ENCODE measurements at regions of chr9 and their contacts with region 1.

Region 1: GRCh38 chr9:22119537-22120158 is 110.5 kb upstream of the CDKN2B start:
- DNase-seq: no peak
- H3K4me3 Mint-ChIP-seq: no peak overlapping the region
- H3K27ac Mint-ChIP-seq: no peak overlapping the region
- H3K4me1 Mint-ChIP-seq: peaks cover 23% of the 10 kb centered on the region
- H3K27me3 Mint-ChIP-seq: peaks cover 53% of the 10 kb centered on the region

Region 2: DNA sequence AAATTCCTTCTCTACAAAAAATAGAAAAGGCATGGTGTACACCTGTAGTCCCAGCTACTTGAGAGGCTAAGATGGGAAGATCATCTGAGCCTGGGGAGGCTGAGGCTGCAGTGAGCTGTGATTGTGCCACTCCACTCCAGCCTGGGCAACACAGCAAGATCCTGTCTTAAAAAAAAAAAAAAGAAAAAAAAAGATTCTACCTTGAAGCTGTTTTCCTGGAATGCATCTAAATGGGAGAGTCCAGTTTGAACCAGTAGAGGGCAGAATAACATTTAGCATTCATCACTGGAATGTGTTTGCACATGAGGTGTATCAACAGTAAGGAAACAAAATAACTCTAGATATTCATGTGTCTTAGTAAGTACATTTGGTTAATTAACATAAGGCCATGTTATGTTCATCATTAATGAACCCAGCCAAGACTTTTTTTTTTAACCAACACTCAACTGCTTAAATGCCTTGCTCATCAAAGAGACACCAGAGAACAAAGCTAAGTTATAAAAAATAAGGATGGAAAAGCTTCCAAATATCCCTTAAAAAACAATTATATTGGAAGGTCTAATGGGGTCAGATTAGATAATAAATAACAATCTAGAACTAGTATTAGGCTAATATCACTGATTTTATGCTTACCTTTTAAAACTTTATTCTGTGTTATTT is 653.7 kb before region 1 on chr9:
- intact Hi-C with region 1: loop called (anchors 10 kb)
- DNase-seq: peak; percentile 10
- H3K4me3 Mint-ChIP-seq: no peak overlapping the region
- H3K27ac Mint-ChIP-seq: no peak overlapping the region
- H3K4me1 Mint-ChIP-seq: no peaks in the 10 kb centered on the region
- H3K27me3 Mint-ChIP-seq: peaks cover 34% of the 10 kb centered on the region

Region 3: DNA sequence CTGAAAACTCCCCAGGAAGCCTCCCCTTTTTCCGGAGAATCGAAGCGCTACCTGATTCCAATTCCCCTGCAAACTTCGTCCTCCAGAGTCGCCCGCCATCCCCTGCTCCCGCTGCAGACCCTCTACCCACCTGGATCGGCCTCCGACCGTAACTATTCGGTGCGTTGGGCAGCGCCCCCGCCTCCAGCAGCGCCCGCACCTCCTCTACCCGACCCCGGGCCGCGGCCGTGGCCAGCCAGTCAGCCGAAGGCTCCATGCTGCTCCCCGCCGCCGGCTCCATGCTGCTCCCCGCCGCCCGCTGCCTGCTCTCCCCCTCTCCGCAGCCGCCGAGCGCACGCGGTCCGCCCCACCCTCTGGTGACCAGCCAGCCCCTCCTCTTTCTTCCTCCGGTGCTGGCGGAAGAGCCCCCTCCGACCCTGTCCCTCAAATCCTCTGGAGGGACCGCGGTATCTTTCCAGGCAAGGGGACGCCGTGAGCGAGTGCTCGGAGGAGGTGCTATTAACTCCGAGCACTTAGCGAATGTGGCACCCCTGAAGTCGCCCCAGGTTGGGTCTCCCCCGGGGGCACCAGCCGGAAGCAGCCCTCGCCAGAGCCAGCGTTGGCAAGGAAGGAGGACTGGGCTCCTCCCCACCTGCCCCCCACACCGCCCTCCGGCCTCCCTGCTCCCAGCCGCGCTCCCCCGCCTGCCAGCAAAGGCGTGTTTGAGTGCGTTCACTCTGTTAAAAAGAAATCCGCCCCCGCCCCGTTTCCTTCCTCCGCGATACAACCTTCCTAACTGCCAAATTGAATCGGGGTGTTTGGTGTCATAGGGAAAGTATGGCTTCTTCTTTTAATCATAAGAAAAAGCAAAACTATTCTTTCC is 144.9 kb before region 1 on chr9:
- intact Hi-C with region 1: loop called (anchors 2 kb)
- DNase-seq: no peak
- H3K4me3 Mint-ChIP-seq: peak overlapping the region; percentile 86
- H3K27ac Mint-ChIP-seq: peak overlapping the region; percentile 66
- H3K4me1 Mint-ChIP-seq: peaks cover 40% of the 10 kb centered on the region
- H3K27me3 Mint-ChIP-seq: peaks cover 91% of the 10 kb centered on the region

Region 4: DNA sequence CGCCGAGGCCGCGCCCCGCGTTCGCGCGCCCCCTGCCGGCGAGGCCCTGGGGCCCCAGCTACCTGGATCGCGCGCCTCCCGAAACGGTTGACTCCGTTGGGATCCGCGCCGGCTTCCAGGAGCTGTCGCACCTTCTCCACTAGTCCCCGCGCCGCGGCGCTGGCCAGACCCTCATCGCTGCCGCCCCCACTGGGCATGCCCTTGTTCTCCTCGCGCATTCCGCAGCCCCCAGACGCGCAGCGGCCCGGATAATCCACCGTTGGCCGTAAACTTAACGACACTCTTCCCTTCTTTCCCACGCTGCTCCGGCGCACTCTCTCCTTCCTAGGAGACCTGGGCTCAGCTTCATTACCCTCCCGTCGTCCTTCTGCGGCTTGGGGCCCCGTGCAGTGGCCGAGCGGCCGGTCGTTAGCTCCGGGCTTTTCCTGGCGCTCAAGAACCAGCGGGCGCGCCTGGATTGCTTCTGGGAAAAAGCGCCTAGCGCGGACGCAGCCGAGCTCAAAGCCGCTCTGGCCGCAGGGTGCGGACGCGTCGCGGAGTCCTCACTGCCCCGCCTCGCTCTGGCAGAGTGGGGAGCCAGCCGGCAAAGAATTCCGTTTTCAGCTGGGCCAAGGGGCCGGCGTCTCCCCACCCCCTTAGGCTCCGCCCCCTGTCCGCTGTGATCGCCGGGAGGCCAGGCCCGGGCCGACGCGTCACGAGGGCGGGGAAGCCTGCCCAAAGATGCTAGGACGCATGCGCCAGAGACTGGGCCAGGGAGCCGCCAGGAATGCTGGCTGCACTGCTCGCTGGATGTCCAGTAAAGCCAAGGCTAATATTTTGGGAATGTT is 110.7 kb before region 1 on chr9 and contains the start of gene CDKN2B:
- intact Hi-C with region 1: loop called (anchors 1 kb)
- DNase-seq: peak; percentile 66
- H3K4me3 Mint-ChIP-seq: peak within 1 kb of the TSS; percentile 82
- H3K27ac Mint-ChIP-seq: no peak within 1 kb of the TSS
- H3K4me1 Mint-ChIP-seq: peaks cover 36% of the 10 kb centered on the region
- H3K27me3 Mint-ChIP-seq: peaks cover 65% of the 10 kb centered on the region
- total RNA-seq, gene CDKN2B: 0.73 and 0.76 TPM in 2 replicates

Region 5: DNA sequence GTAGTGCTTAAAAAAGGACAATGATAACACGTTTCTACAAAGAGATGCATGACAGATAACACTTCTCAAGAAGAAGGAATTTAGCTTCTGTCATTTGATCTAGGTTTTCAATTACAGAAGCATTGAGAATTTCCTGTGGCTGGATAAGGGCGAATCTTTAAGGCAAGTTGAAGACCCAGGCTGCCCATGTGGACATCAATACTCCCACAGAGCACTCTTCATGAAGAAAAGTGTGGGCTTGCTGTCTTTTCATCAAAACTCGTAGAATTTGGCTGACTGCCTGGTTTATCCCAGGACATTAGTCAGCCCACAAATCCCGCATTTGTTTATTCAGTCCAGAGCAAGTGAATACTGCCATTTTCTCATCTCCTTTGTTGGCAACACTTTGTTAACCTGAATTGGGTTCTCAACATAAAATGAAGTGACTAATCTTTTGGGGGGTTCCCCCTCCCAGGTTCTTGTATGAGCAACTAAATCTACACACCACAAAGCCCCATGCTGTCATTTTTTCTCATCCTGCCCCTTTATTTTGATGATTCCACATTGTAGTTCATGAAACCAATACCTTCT is 67.2 kb before region 1 on chr9:
- intact Hi-C with region 1: loop called (anchors 2 kb)
- DNase-seq: peak; percentile 40
- H3K4me3 Mint-ChIP-seq: no peak overlapping the region
- H3K27ac Mint-ChIP-seq: peak overlapping the region; percentile 5
- H3K4me1 Mint-ChIP-seq: peaks cover 32% of the 10 kb centered on the region
- H3K27me3 Mint-ChIP-seq: peaks cover 26% of the 10 kb centered on the region

Region 6: DNA sequence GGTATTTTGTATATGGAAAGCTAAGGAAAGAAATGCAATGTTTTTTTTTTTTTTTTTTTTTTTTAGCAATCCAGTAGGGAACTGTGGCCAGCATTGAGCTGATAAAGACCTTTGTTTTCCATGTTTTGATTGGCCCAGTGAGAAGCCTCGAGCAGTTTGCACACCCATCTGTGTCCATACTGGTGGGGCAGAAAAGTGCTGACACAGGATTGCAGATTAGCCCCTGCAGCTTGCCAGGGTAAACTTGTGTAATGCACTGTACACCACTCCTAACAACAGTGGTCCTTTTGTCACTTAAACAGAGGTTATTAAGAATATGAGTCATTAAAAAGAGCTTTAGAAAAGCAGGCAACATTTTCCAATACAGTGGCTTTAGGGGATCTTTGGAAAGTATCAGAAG is 22.3 kb after region 1 on chr9:
- intact Hi-C with region 1: loop called (anchors 2 kb)
- DNase-seq: no peak
- H3K4me3 Mint-ChIP-seq: no peak overlapping the region
- H3K27ac Mint-ChIP-seq: no peak overlapping the region
- H3K4me1 Mint-ChIP-seq: peaks cover 4% of the 10 kb centered on the region
- H3K27me3 Mint-ChIP-seq: peaks cover 46% of the 10 kb centered on the region

Region 7: DNA sequence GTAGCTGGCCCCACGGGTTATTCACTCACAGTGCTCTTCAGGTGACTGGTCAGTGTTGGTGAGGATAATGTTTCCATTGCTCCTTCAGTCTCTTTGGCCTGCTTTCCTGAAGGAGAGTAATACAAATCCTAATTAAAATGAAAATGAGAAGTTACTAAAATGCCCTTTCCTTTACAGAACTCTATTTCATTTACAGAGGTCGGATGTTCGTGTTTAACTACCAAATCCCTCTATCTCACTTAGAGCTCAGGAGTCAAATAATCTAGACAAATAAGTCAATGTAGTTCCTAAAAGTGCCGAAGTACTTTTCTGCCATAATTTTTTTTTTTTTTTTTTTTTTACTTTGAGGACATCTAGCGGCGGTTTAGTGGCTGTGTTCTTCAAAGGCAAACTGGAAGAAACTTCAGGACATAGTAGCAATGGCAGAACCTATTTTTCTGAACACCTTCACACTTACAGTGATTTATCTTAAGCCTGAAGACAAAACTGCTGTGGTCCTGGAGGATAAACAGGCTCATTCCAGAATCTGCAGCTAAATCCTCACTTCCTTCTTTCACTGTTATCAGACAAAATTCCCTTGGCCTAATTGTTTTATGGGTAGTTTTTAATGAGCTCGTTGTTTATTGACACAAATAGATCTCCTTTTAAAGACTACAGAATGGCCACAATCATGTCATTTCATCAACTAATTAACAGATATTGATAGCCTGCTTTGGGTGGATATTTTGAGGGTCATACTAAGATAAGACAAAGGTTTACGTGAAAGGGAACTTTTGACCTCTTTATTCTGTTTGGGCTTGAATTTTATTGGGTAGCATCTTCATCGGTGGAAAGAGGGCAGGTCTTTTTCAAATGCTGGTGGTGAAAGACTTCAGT is 119.4 kb after region 1 on chr9:
- intact Hi-C with region 1: loop called (anchors 5 kb)
- DNase-seq: no peak
- H3K4me3 Mint-ChIP-seq: no peak overlapping the region
- H3K27ac Mint-ChIP-seq: no peak overlapping the region
- H3K4me1 Mint-ChIP-seq: peaks cover 50% of the 10 kb centered on the region
- H3K27me3 Mint-ChIP-seq: peaks cover 43% of the 10 kb centered on the region

Measured in activated T-helper 1 cell treated with anti-CD3 and anti-CD28 coated beads, Interleukin-12 subunit alpha, Interleukin-12 subunit beta, Interleukin-2, Interleukin-4 antibody, amounts not matched to agents 30 ng/mL and 10 ng/mL and 1 ng/mL, durations not matched to agents 14 hours and 24 hours and 36 hours (primary cell).